Lower leg skin (tissue), 4 donors: ENCODE measurements at regions of chr7 and their contacts with region 1.

Region 1: GRCh38 chr7:105876091-105876963 is at the start of gene ATXN7L1:
- DNase-seq: peak; percentile 95 to 98
- H3K4me3 ChIP-seq: peak within 1 kb of the TSS; percentile 73
- CTCF ChIP-seq: no peak
- POLR2A ChIP-seq: no peak
- total RNA-seq, gene ATXN7L1: 8.1 to 13.5 (median 9.1) TPM

Region 2: GRCh38 chr7:105678811-105679495 is 197.4 kb before region 1 on chr7:
- intact Hi-C with region 1: loop called (anchors 10 kb)
- DNase-seq: peak; percentile 88 to 95
- H3K4me3 ChIP-seq: peak overlapping the region; percentile 20
- CTCF ChIP-seq: no peak
- POLR2A ChIP-seq: no peak

Region 3: GRCh38 chr7:105723572-105723971 is 152.8 kb before region 1 on chr7:
- intact Hi-C with region 1: no loop called
- DNase-seq: no peak
- H3K4me3 ChIP-seq: no peak overlapping the region
- CTCF ChIP-seq: no peak
- POLR2A ChIP-seq: no peak

Region 4: DNA sequence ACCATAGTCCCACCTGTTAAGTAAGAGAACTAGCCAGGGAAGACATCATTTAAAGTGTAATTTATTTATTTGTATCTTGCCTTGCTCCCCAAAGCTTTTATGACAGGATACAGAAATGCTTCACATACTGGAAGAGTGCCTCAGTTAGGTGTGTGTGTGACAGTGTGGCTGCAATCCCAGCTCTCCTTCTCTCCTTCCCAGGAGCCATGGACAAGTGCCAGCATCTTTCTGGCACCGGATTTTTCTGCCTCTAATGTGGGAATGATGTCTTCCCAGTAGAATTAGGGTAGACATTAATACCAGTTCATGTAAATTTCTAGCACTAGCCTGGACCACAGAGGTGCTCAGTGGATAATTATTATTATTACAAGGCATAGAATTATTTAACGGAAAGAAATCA is 30.4 kb after region 1 on chr7:
- intact Hi-C with region 1: no loop called
- DNase-seq: no peak
- H3K4me3 ChIP-seq: no peak overlapping the region
- CTCF ChIP-seq: no peak
- POLR2A ChIP-seq: no peak

Region 5: DNA sequence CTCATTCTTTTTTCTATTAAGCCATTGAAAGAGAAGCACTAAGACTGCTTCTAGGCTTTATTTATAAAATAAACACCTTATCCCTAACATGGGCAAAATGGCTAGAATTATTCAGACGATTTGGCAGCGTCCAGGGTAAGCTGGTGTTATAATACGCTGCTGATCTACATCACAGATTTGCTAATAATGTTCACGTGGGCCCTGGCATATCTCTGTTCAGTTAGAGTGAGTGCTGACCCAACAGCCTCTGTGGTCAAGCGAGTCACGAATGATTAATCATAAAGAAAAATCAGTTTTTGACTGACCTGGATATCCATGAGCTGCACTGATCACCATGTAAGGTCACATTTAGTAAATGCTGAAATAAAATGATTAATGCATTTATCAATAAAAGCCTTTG is 1839.2 kb after region 1 on chr7:
- intact Hi-C with region 1: loop called (anchors 5 kb)
- DNase-seq: no peak
- H3K4me3 ChIP-seq: no peak overlapping the region
- CTCF ChIP-seq: no peak
- POLR2A ChIP-seq: no peak